ENCODE measurements at regions of chr9 and their contacts with region 1.

Region 1: GRCh38 chr9:69421908-69422801 is 97.1 kb downstream of the ENTREP1 start:
- H3K4me3 ChIP-seq: no peak overlapping the region
- H3K27ac ChIP-seq: no peak overlapping the region
- H3K4me1 ChIP-seq: no peaks in the 10 kb centered on the region
- CTCF ChIP-seq: peak; percentile 81

Region 2: DNA sequence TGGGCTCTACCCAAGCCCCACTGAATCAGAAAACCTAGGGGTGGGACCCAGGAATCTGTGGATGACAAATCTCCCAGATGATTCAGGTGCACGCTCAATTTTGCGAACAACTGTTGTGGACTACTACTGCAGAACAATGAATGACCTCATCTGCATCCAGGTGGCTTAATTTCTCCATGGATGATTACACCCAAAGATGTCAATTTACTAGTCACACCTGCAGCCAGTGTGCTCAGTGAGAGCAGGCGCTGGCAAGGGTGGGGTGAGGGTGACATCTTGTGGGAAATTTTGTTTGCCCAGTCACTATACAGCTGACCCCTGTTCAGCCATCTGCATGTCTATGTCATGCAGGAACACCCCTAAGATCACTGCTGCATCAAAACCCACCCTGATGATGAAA is 21.0 kb after region 1 on chr9:
- CTCF ChIA-PET with region 1: interaction called, 10 read pairs
- POLR2A ChIA-PET with region 1: no interaction called
- H3K4me3 ChIP-seq: no peak overlapping the region
- H3K27ac ChIP-seq: no peak overlapping the region
- H3K4me1 ChIP-seq: no peaks in the 10 kb centered on the region
- CTCF ChIP-seq: no peak

Region 3: DNA sequence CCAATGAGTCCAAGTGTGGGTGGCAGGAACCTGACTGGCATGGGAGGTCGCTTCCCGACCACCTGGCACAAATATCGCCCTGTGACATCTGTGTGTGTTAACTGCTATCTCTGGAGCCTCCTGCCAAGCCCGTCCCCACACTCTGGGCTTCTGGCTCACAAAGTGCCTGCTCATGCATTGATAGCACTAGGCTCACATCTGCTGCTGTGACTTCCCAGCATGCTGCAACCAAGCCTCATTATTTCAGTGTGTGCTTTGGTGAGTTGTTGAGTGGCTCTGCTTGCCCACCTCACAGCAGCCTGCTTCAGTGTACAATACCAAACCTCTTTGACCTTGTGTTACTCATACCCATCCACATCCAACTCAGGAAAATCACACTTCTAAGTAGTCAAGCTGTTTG is 110.2 kb after region 1 on chr9:
- CTCF ChIA-PET with region 1: interaction called, 11 read pairs
- POLR2A ChIA-PET with region 1: no interaction called
- H3K4me3 ChIP-seq: no peak overlapping the region
- H3K27ac ChIP-seq: no peak overlapping the region
- H3K4me1 ChIP-seq: no peaks in the 10 kb centered on the region
- CTCF ChIP-seq: no peak

Region 4: GRCh38 chr9:69554945-69555344 is 132.8 kb after region 1 on chr9:
- CTCF ChIA-PET with region 1: interaction called, 63 read pairs
- POLR2A ChIA-PET with region 1: no interaction called
- H3K4me3 ChIP-seq: no peak overlapping the region
- H3K27ac ChIP-seq: no peak overlapping the region
- H3K4me1 ChIP-seq: no peaks in the 10 kb centered on the region
- CTCF ChIP-seq: no peak

Region 5: DNA sequence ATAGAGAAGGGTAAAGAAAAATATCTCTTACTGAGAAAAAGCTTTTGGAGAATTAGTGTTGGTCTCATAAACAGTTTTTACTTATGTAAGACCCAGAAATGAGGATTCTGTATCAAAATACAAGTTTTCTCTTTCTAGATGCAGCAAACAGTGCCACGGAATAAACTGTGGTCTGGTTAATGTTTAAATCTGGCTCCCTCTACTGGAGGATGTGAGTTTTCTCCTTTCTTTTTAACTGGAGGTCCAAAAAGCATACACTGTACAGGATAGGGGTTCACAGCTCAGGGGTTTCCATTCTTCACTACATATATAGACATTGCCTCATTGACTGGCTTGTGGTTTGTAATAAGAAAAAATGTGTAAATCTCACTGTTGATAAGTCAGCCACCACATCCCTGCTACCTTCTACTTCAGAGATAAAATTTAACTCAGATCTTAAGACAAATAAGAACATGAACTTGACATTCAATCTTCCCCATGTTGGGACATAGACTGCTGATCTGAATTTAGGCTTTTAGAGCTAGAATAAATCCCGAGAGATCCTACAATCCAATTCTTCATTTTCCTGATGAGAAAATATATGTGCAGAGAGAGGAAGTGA is 497.4 kb after region 1 on chr9:
- CTCF ChIA-PET with region 1: interaction called, 25 read pairs
- POLR2A ChIA-PET with region 1: no interaction called
- H3K4me3 ChIP-seq: no peak overlapping the region
- H3K27ac ChIP-seq: no peak overlapping the region
- H3K4me1 ChIP-seq: no peaks in the 10 kb centered on the region
- CTCF ChIP-seq: no peak